ENCODE measurements at regions of chr4 and their contacts with region 1.

Region 1: GRCh38 chr4:102500696-102501446 is at the start of gene NFKB1:
- DNase-seq: peak; percentile 82
- H3K4me3 ChIP-seq: peak within 1 kb of the TSS; percentile 74 to 91 (median 82)
- H3K27ac ChIP-seq: peak within 1 kb of the TSS; percentile 97 to 99 (median 98)
- H3K4me1 ChIP-seq: peaks cover 0 to 48% (median 33%) of the 10 kb centered on the region in 4 donors
- H3K27me3 ChIP-seq: no peaks in the 10 kb centered on the region
- CTCF ChIP-seq: no peak
- EP300 ChIP-seq: no peak
- POLR2A ChIP-seq: no peak
- total RNA-seq, gene NFKB1: 23.5 to 29.4 (median 27.7) TPM

Region 2: DNA sequence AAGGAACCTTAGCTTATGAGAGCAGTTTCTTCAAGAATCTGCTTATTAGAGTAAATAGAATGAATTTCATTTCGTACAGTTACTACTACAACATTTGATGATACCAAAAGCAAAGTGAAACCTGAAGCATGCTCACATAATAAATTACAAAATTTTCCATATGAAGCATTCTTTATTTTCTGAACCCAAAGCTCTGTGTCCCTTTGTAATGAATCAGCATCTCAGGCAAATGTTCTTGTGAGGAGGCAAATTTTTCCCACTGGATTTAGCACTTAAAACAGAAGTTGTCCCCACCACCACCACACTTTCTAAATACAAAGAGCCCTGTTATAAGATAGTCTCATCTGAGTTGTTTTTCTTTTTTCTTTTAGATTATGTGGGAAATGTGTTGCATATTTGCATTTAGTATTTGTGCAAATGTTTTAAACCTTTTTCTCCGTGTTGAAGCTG is 70.4 kb before region 1 on chr4:
- intact Hi-C with region 1: loop called (anchors 2 kb)
- DNase-seq: no peak
- H3K4me3 ChIP-seq: peak overlapping the region; percentile 45 to 58 (median 54)
- H3K27ac ChIP-seq: peak overlapping the region; percentile 60 to 76 (median 63)
- H3K4me1 ChIP-seq: no peaks in the 10 kb centered on the region
- H3K27me3 ChIP-seq: no peaks in the 10 kb centered on the region
- CTCF ChIP-seq: no peak
- EP300 ChIP-seq: no peak
- POLR2A ChIP-seq: no peak

Region 3: GRCh38 chr4:102620697-102621497 is 120.0 kb after region 1 on chr4:
- intact Hi-C with region 1: loop called (anchors 5 kb)
- DNase-seq: no peak
- H3K4me3 ChIP-seq: peak overlapping the region in 1 of 4 donors; percentile 7
- H3K27ac ChIP-seq: peak overlapping the region in 1 of 4 donors; percentile 42
- H3K4me1 ChIP-seq: peaks cover 0 to 9% (median 6%) of the 10 kb centered on the region in 4 donors
- H3K27me3 ChIP-seq: no peaks in the 10 kb centered on the region
- CTCF ChIP-seq: peak; percentile 34 to 73 (median 50)
- EP300 ChIP-seq: no peak
- POLR2A ChIP-seq: no peak

Region 4: DNA sequence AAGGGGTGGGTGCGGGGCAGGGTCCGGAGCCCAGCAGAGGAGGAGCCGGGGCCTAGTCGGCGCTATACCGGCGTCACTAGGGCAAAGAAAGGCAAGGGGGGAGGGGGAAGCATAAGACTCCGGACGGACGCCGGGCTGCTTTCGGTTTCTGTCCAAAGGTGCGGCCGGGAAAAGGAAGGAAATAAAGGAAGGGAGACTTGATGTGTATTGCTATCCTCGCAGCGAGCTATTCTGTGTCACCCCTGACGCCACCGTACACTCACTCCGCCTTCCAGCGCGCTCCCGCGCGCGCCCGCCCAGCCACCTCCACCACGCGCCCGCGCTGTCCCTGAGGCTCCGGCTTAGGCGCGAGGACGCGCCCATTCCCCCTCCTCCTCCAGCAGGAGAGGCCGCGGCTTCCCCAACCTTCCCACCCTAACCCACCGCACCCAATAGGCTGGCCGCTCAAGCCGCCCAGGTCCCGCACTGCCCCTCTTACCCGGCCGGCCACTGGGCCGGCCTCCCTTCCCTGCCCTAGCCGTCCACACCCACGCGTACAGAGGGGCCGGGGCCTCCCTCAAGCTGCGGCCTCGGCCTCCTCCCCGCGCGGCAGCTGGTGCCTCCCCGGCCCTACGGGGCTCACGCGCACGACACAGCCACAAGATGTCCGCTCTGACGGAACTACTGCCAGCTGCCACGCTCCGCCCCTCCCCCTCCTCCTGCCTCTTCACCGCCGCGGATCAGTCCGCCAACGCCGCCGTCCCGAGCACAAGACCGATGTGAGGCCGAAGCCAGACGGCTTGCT is 326.2 kb after region 1 on chr4 and contains the start of gene UBE2D3:
- intact Hi-C with region 1: loop called (anchors 2 kb)
- DNase-seq: peak; percentile 99
- H3K4me3 ChIP-seq: peak within 1 kb of the TSS; percentile 90 to 96 (median 93)
- H3K27ac ChIP-seq: peak within 1 kb of the TSS; percentile 99 to 100 (median 100)
- H3K4me1 ChIP-seq: peaks cover 4 to 43% (median 35%) of the 10 kb centered on the region in 4 donors
- H3K27me3 ChIP-seq: no peaks in the 10 kb centered on the region
- CTCF ChIP-seq: no peak
- EP300 ChIP-seq: peak in 2 of 4 donors; percentile 46 to 49
- POLR2A ChIP-seq: peak; percentile 59 to 82
- total RNA-seq, gene UBE2D3: 273 to 404 (median 305) TPM

Region 5: GRCh38 chr4:103019308-103020124 is 518.6 kb after region 1 on chr4 and contains the start of gene SLC9B1:
- intact Hi-C with region 1: loop called (anchors 5 kb)
- DNase-seq: peak; percentile 99
- H3K4me3 ChIP-seq: peak within 1 kb of the TSS; percentile 30 to 52 (median 48)
- H3K27ac ChIP-seq: peak within 1 kb of the TSS; percentile 84 to 89 (median 89)
- H3K4me1 ChIP-seq: peaks cover 0 to 13% (median 9%) of the 10 kb centered on the region in 4 donors
- H3K27me3 ChIP-seq: no peaks in the 10 kb centered on the region
- CTCF ChIP-seq: no peak
- EP300 ChIP-seq: peak in 3 of 4 donors; percentile 37 to 94 (median 77)
- POLR2A ChIP-seq: peak; percentile 78 to 82
- total RNA-seq, gene SLC9B1: 0.82 to 3.9 (median 1.2) TPM in 3 of 4 donors, not detected in the other